IMR-90 (cell line): ENCODE measurements at regions of chrX and their contacts with region 1.

Region 1: DNA sequence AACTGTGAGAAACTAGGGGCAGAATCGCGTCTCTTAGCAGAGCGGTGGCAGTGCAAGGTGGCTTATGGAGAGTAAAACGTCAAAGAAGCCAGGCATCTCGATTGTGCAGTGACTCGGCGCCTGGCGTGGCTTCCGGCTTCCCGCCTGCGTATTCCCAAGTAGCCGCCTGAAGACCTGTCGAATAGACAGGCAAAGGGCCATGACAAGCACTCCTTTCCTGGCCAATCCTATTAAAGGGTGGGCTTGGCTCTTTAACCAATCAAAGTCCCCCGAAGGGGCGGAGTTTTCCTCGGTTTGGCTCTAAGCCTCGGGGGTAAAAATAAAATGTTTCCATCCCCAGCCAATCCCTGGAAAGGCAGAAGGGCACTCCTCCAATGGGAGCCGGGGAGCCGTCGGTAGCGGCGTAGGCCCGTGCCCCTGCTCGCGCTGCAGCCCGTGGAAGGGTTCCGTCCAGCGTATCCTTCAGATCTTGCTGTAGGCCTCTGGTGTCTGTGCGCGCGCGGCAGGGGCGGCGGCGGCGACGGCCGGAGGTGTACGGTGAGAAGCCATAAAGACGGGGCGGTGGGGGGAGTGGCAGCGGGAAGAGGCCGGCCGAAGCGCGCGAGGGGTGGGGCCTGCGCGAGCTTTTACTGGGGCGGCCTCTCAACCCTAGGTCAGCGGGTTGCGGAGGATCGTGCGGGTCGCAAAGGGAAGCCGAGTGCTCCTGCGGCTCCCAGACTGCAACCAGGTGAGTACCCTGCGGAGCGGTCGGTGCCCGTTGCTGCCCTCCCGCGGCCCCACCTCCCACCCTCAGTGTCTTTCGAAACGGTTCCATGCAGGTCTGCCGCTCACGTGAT is at the start of gene KANTR:
- DNase-seq: peak; percentile 93
- ATAC-seq: peak; percentile 89
- H3K4me3 ChIP-seq: peak within 1 kb of the TSS; percentile 55
- H3K27ac ChIP-seq: peak within 1 kb of the TSS; percentile 45
- H3K4me1 ChIP-seq: no peaks in the 10 kb centered on the region
- H3K27me3 ChIP-seq: peaks cover 3% of the 10 kb centered on the region; the same call in 1 of the 2 replicates
- CTCF ChIP-seq: no peak
- POLR2A ChIP-seq: no peak
- RAD21 ChIP-seq: no peak
- total RNA-seq, gene KANTR: 3.6 and 6.3 TPM in 2 replicates

Region 2: DNA sequence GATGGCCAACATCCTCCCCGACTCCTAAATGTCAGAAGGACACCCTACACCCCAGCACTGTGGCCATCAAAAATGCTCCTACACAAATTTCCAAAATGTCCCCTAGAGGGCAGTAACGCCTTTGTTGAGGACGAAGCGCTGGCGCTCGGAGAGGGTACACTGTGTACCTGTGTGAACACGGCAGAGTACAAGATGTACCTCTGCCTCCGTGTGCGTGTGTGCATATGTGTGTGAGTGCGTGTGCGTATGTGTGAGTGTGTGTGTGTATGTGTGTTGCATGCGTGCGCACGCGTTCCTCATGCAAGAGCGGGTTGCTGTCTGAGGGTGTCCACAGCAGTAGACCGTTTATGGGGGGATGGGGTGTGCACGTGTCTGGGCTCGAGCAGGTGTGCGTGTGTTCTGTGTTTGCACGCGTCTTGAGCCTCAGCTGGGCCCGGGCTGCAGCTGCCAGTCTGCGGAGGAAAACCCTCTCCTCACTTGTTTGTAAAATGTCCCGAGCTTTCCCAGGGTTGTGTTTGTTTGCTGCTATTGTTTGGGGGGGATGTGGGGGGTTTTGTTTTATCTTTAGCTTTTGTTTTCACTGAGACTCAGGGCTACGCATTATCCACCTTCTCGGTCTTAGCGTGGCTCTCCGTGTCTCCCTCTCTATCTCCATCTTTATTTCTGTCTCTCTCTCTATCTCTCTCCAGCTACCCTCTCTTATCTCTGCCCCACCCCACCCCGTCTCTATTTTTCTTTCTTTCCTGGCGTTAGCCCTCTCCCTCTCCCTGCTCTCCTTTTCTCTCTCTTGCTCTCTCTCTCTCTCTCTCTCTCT is 22.2 kb before region 1 on chrX:
- CTCF ChIA-PET with region 1: no interaction called
- POLR2A ChIA-PET with region 1: no interaction called
- dilution Hi-C with region 1: no loop called
- in situ Hi-C with region 1: no loop called
- intact Hi-C with region 1: loop called (anchors 1 kb)
- DNase-seq: peak; percentile 56
- ATAC-seq: peak; percentile 92
- H3K4me3 ChIP-seq: no peak overlapping the region
- H3K27ac ChIP-seq: no peak overlapping the region
- H3K4me1 ChIP-seq: peaks cover 2% of the 10 kb centered on the region; the same call in 1 of the 2 replicates
- H3K27me3 ChIP-seq: no peaks in the 10 kb centered on the region; the same call in none of the 2 replicates
- CTCF ChIP-seq: peak; percentile 68
- POLR2A ChIP-seq: no peak
- RAD21 ChIP-seq: peak; percentile 72

Region 3: DNA sequence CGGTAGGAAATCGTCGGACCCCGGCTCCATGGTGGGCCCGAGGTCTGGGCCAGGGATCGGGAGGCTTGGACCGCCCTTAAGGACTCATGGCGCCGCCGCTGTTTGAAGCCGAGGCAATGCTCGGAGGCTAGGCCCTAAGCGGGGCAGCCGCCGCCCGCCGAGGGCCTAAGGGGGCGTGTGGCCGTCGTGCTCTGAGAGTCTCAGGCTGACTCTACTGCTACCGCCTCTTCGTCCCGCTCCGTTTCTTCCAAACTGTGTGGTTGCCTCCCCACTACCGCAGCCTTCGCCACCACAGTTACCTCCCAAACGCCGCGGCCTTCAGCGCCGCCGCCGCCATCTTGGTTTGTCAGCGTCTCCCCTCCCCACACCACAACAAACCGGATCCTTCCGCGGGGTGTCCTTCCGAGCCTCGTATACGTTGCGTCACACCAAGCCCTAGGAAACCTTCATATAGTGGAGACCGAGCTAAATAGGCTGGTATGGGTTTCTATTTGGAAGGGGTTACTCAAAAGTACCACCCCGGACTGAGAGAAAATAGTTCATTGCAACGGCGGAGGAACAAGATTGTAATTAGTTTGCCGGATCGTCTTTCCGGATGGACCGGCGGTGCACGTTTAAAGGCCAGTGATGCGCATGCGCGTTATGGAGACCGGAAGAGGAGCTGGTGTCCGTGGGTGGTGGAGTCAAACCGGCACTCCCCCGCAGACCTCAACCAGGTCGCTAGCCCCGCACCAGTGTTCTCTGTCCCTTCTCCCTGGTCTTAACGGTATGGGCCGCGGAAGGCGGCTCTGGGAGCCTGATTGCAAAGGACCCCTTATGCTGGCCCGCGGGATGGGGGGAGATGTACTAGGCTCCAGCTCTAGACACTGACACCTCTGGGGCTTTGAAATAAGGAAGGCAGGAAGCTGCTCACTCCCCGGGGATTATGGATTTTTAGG is 131.2 kb after region 1 on chrX and contains the start of gene KDM5C:
- CTCF ChIA-PET with region 1: no interaction called
- POLR2A ChIA-PET with region 1: no interaction called
- dilution Hi-C with region 1: no loop called
- in situ Hi-C with region 1: no loop called
- intact Hi-C with region 1: loop called (anchors 5 kb)
- DNase-seq: peak; percentile 94
- ATAC-seq: peak; percentile 82
- H3K4me3 ChIP-seq: peak within 1 kb of the TSS; percentile 75
- H3K27ac ChIP-seq: peak within 1 kb of the TSS; percentile 93
- H3K4me1 ChIP-seq: peaks cover 13% of the 10 kb centered on the region
- H3K27me3 ChIP-seq: peaks cover 2% of the 10 kb centered on the region; the same call in 1 of the 2 replicates
- CTCF ChIP-seq: no peak
- POLR2A ChIP-seq: peak; percentile 93
- RAD21 ChIP-seq: no peak
- total RNA-seq, gene KDM5C: 65.8 and 84.6 TPM in 2 replicates